ENCODE measurements at regions of chr7 and their contacts with region 1.

Region 1: GRCh38 chr7:47937065-47937683 is 11.1 kb downstream of the PKD1L1 start:
- DNase-seq: peak; percentile 90
- CTCF ChIP-seq: no peak

Region 2: DNA sequence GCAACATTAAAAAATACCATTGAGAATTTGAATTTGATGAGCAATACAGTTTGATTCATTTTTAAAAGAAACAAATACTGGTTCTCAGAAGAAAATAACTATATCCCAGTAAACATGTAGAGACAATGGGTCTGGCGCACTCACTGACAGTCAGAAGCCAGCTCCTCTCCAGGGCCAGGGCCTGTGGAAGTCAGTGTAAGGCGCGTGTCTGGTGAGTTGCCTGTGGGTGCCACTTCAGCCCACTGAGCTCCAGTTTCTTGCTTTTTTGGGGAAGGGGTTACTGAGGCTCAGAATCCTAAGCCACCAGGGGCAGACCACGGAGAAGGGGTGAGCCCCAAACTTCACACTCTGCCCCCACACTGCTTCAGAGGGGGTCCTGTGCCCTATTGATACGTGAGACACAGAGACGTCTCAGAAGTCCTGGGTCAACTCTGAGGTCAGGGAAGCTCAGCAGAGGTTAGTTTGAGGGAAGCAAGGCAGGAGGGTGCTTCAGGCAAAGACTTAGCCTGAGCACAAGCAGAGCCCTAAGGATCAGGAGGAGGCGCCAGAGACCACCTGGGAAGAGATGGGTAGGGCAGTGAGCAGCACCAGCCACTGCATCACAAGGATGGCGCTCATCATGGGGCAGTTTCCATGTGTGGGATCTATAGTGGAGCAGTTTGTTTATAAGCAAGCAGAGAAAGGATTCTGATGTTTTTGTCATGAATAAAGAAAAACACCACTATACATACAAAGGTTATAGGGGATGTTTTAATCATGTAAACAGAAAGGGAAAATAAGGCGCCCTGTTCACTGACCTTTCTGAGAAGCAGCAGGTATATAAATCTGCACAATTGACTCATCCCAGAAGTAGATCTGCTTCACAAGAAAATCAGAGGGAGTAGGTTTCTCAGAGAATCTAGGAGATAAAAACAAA is 84.6 kb before region 1 on chr7:
- CTCF ChIA-PET with region 1: interaction called, 10 read pairs
- POLR2A ChIA-PET with region 1: no interaction called
- DNase-seq: peak; percentile 50
- CTCF ChIP-seq: peak; percentile 49